H1 (cell line): ENCODE measurements at regions of chr3 and their contacts with region 1.

Region 1: DNA sequence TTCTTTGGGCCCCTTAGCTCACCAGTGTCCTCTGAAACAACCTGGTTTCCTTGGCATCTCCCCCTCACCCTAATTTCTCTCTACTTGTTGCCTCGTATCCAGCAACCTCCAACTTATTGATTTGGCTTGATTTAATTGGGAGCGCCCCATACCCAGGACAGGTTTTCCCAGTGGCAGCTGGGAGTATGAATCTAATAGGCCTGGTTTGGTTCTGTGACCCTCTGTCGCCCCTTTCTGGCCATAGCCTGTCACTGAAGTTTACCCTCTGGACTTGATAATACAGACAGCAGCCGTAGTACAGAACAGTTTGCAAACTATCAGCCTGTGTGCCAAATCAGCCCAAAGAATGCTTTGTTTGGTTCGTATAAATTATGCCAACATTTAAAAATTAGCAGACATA is 525.1 kb upstream of the GOLIM4 start:
- DNase-seq: peak; percentile 21 to 73
- H3K4me3 ChIP-seq: no peak overlapping the region
- H3K27ac ChIP-seq: no peak overlapping the region
- H3K4me1 ChIP-seq: peaks cover 0 to 27% (median 16%) of the 10 kb centered on the region in 4 experiments; a peak in 6 of 7 replicates
- H3K27me3 ChIP-seq: no peaks in the 10 kb centered on the region
- CTCF ChIP-seq: peak; percentile 53 to 97 (median 80)
- EP300 ChIP-seq: no peak
- POLR2A ChIP-seq: no peak
- RAD21 ChIP-seq: peak; percentile 95 to 97

Region 2: DNA sequence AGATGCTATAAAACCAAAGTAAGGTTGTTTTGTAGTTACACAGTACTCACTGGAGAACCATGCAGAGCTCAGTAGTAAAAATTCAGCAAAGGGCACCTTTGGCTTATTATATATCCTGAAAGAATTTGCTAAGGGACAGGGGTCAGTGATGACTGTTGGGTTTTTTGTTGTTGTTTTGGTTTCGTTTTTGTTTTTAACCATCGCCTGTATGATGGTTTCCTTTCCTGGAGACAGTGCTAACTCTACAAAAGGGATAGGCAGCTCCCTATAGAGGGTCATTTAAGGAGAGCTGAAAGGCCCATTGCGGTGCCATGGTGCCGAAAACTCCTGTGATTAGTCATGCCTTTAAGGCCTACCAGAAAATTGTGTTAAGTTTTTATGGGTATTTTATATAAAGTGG is 406.9 kb before region 1 on chr3:
- CTCF ChIA-PET with region 1: interaction called, 64 read pairs
- POLR2A ChIA-PET with region 1: no interaction called
- DNase-seq: no peak
- H3K4me3 ChIP-seq: no peak overlapping the region
- H3K27ac ChIP-seq: no peak overlapping the region
- H3K4me1 ChIP-seq: no peaks in the 10 kb centered on the region
- H3K27me3 ChIP-seq: no peaks in the 10 kb centered on the region
- CTCF ChIP-seq: no peak
- EP300 ChIP-seq: no peak
- POLR2A ChIP-seq: no peak
- RAD21 ChIP-seq: no peak

Region 3: GRCh38 chr3:168511428-168512014 is 109.3 kb before region 1 on chr3:
- CTCF ChIA-PET with region 1: interaction called, 36 read pairs
- POLR2A ChIA-PET with region 1: interaction called, 4 read pairs
- DNase-seq: no peak
- H3K4me3 ChIP-seq: no peak overlapping the region
- H3K27ac ChIP-seq: no peak overlapping the region
- H3K4me1 ChIP-seq: peaks cover 2 to 7% (median 5%) of the 10 kb centered on the region in 4 experiments; a peak in 2 of 7 replicates
- H3K27me3 ChIP-seq: no peaks in the 10 kb centered on the region
- CTCF ChIP-seq: peak in 2 of 3 experiments; percentile 47 to 58; a peak in 2 of 4 replicates
- EP300 ChIP-seq: no peak
- POLR2A ChIP-seq: no peak
- RAD21 ChIP-seq: peak; percentile 70 to 72

Region 4: DNA sequence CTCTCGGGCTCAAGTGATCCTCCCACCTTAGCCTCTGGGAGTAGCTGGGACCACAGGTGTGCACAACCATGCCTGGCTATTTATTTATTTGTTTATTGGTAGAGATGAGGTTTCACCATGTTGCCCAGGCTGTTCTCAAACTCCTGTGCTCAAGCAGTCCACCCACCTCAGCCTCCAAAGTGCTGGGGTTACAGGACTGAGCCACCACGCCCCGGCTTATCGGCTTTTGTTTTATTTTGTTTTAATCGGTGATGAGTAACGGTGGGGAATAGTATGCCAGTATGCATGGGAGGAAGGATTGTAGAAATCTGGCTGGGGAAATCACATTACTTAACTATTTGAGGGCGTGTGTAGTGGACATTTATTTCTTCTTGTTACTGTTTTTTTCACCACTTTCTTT is 74.1 kb before region 1 on chr3:
- CTCF ChIA-PET with region 1: interaction called, 11 read pairs
- POLR2A ChIA-PET with region 1: interaction called, 3 read pairs
- DNase-seq: no peak
- H3K4me3 ChIP-seq: no peak overlapping the region
- H3K27ac ChIP-seq: no peak overlapping the region
- H3K4me1 ChIP-seq: peaks cover 2 to 9% (median 4%) of the 10 kb centered on the region in 4 experiments; a peak in 4 of 7 replicates
- H3K27me3 ChIP-seq: no peaks in the 10 kb centered on the region
- CTCF ChIP-seq: no peak
- EP300 ChIP-seq: no peak
- POLR2A ChIP-seq: no peak
- RAD21 ChIP-seq: no peak

Region 5: GRCh38 chr3:168604767-168605166 is 16.1 kb before region 1 on chr3:
- CTCF ChIA-PET with region 1: interaction called, 43 read pairs
- POLR2A ChIA-PET with region 1: no interaction called
- DNase-seq: no peak
- H3K4me3 ChIP-seq: no peak overlapping the region
- H3K27ac ChIP-seq: no peak overlapping the region
- H3K4me1 ChIP-seq: no peaks in the 10 kb centered on the region; a peak in 1 of 7 replicates
- H3K27me3 ChIP-seq: no peaks in the 10 kb centered on the region
- CTCF ChIP-seq: no peak
- EP300 ChIP-seq: no peak
- POLR2A ChIP-seq: no peak
- RAD21 ChIP-seq: no peak

Region 6: GRCh38 chr3:168644967-168645579 is 24.2 kb after region 1 on chr3:
- CTCF ChIA-PET with region 1: no interaction called
- POLR2A ChIA-PET with region 1: no interaction called
- DNase-seq: no peak
- H3K4me3 ChIP-seq: no peak overlapping the region
- H3K27ac ChIP-seq: no peak overlapping the region
- H3K4me1 ChIP-seq: no peaks in the 10 kb centered on the region
- H3K27me3 ChIP-seq: no peaks in the 10 kb centered on the region
- CTCF ChIP-seq: no peak
- EP300 ChIP-seq: no peak
- POLR2A ChIP-seq: no peak
- RAD21 ChIP-seq: no peak